Activated CD4-positive, alpha-beta T cell treated with anti-CD3 and anti-CD28 coated beads for 36 hours (primary cell): ENCODE measurements at regions of chr11 and their contacts with region 1.

Region 1: GRCh38 chr11:61111786-61112517 is 9.7 kb downstream of the CD5 start:
- DNase-seq: peak; percentile 86
- ATAC-seq: peak; percentile 90
- H3K4me3 Mint-ChIP-seq: no peak overlapping the region
- H3K27ac Mint-ChIP-seq: no peak overlapping the region
- H3K4me1 Mint-ChIP-seq: peaks cover 99% of the 10 kb centered on the region
- H3K27me3 Mint-ChIP-seq: no peaks in the 10 kb centered on the region

Region 2: DNA sequence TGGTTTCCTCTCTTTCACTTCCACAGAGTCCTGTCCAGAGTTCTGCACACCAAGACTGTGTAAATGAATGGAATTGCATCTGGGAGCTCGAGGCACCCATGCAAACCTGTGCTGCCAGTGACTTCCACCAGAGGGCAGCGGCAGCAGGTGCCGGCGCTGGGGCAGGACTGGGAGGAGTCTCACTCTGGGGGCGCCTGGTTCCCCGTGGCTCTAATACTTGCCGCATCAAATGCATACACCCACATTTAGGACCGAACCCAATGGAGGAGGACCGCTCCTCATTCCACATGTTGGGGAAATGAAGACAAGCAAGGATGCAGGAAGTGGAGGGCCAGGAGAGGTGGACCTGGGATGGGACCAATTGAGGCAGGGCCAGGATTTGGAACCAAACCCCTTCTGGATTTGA is 141.6 kb before region 1 on chr11:
- CTCF ChIA-PET with region 1: interaction called, 3 read pairs
- POLR2A ChIA-PET with region 1: interaction called, 7 read pairs
- intact Hi-C with region 1: loop called in 1 of 2 experiments (anchors 2 kb)
- DNase-seq: peak; percentile 91
- ATAC-seq: peak; percentile 51
- H3K4me3 Mint-ChIP-seq: peak overlapping the region; percentile 87
- H3K27ac Mint-ChIP-seq: peak overlapping the region; percentile 98
- H3K4me1 Mint-ChIP-seq: peaks cover 16% of the 10 kb centered on the region
- H3K27me3 Mint-ChIP-seq: peaks cover 2% of the 10 kb centered on the region

Region 3: DNA sequence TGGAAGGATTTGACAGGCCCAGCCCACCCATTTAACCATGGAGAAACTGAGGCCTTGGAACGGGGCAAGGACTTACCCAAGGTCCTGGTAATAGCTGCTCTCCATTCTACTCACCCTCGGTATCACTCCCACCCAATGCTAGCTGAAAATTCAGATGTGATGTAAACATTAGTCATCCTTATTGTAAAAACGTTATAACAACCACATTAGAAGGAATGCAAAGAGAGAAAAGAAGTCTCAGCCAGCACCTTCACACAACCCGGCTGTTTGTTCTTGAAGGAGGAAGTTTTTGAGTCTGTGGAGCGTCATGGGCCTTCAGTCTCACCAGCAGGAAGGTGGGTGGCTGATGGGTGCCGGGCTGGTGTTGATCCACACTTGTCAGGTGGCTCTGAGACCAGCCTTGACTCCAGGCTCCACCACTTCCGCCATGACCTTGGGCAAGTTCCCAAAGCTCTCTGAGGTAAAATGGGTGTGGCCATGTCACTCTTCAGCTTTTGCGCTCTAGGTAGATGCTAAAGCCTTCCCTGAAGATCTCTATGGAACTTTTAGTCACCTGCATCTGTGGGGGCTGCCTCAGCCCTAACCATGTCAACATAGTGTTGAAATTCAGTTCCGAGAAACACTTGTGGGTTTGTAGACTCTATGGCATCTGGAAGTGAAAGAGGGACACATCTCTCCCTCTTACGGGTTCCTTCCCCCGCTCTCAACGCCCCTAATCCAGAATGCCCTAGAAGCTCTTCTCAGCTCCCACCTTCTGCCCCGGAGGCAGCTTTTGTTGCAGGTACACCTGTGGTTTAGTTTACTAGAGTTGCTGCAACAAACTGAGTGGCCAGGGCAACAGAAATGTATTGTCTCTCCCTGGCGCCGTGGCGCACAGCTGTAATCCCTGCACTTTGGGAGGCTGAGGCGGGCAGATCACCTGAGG is 125.7 kb before region 1 on chr11:
- CTCF ChIA-PET with region 1: interaction called, 5 read pairs
- POLR2A ChIA-PET with region 1: interaction called, 4 read pairs
- intact Hi-C with region 1: loop called (anchors 2 kb)
- DNase-seq: peak; percentile 97
- ATAC-seq: peak; percentile 76
- H3K4me3 Mint-ChIP-seq: peak overlapping the region; percentile 87
- H3K27ac Mint-ChIP-seq: peak overlapping the region; percentile 96
- H3K4me1 Mint-ChIP-seq: peaks cover 94% of the 10 kb centered on the region
- H3K27me3 Mint-ChIP-seq: no peaks in the 10 kb centered on the region

Region 4: DNA sequence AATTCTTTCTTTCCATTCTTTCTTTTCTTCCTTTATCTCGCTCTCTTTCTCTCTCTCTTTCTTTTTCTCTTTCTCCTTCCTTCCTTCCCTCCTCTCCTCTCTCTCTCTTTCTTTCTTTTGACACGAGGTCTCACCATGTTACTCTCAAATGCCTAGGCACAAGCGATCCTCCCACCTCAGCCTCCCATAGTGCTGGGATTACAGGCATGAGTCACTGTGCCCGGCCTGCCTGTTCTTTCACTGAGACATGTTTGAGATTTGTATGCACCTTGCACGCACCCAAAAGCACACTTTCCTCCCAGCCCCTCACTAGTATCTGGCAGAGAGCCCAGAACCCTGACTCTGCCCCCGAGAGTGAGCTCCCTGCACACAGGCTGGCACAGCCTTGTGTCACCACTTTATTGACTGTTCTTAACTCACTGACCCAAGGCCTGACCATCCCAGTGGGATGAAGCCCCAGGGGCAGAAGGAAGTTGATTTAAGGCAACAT is 83.6 kb before region 1 on chr11:
- CTCF ChIA-PET with region 1: interaction called, 5 read pairs
- POLR2A ChIA-PET with region 1: interaction called, 8 read pairs
- intact Hi-C with region 1: loop called (anchors 2 kb)
- DNase-seq: peak; percentile 87
- ATAC-seq: peak; percentile 45
- H3K4me3 Mint-ChIP-seq: peak overlapping the region; percentile 79
- H3K27ac Mint-ChIP-seq: peak overlapping the region; percentile 97
- H3K4me1 Mint-ChIP-seq: peaks cover 87% of the 10 kb centered on the region
- H3K27me3 Mint-ChIP-seq: no peaks in the 10 kb centered on the region

Region 5: GRCh38 chr11:61071208-61071681 is 40.7 kb before region 1 on chr11:
- CTCF ChIA-PET with region 1: interaction called, 4 read pairs
- POLR2A ChIA-PET with region 1: interaction called, 6 read pairs
- intact Hi-C with region 1: loop called in 1 of 2 experiments (anchors 5 kb)
- DNase-seq: peak; percentile 78
- ATAC-seq: peak; percentile 87
- H3K4me3 Mint-ChIP-seq: peak overlapping the region; percentile 59
- H3K27ac Mint-ChIP-seq: peak overlapping the region; percentile 93
- H3K4me1 Mint-ChIP-seq: peaks cover 95% of the 10 kb centered on the region
- H3K27me3 Mint-ChIP-seq: no peaks in the 10 kb centered on the region

Region 6: DNA sequence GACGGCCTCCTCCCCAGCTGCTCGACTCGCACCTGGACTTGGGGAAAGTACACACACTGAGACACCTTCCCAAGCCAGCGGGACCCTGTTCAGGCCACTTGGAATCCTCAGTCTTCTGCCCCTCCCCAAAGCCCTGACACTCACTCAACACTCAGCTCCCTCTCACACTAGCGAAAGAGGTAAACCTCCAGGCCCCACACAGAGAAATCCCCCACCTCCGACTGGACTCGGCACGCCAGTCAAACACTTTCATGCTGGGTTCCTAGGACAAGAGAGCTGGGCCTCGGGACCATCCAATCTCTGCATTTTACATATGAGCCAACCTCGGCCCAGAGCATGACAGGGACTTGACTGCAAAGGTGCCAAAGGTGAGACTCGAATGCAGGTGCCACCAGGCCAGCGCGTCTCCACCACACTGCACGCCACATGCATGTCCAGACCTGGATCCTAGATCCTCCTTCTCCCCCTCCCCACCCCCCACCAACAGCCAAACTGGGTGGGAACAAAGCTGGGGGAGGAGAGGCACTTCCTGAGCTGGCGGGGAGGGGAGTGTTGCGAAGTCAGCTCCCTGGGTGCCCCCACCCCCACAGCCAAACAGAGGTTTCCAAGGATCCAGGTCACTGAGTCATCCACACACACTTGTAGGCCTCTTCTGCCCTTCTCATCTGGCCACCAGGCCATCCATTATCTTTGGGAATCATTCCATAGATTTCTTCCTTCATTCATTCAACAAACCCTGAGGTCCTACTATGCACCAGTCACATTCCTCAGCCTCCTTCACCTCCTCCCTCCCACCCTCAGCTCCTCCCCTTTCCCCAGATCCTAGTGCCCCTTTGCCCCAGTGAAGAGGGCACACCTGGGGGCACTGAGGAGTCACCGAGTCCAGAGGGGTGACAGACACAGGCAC is 20.3 kb before region 1 on chr11:
- CTCF ChIA-PET with region 1: interaction called, 5 read pairs
- POLR2A ChIA-PET with region 1: interaction called, 18 read pairs
- intact Hi-C with region 1: no loop called
- DNase-seq: peak; percentile 84
- ATAC-seq: peak; percentile 71
- H3K4me3 Mint-ChIP-seq: peak overlapping the region; percentile 91
- H3K27ac Mint-ChIP-seq: peak overlapping the region; percentile 98
- H3K4me1 Mint-ChIP-seq: peaks cover 63% of the 10 kb centered on the region
- H3K27me3 Mint-ChIP-seq: no peaks in the 10 kb centered on the region